ENCODE measurements at regions of chr10 and their contacts with region 1.

Region 1: DNA sequence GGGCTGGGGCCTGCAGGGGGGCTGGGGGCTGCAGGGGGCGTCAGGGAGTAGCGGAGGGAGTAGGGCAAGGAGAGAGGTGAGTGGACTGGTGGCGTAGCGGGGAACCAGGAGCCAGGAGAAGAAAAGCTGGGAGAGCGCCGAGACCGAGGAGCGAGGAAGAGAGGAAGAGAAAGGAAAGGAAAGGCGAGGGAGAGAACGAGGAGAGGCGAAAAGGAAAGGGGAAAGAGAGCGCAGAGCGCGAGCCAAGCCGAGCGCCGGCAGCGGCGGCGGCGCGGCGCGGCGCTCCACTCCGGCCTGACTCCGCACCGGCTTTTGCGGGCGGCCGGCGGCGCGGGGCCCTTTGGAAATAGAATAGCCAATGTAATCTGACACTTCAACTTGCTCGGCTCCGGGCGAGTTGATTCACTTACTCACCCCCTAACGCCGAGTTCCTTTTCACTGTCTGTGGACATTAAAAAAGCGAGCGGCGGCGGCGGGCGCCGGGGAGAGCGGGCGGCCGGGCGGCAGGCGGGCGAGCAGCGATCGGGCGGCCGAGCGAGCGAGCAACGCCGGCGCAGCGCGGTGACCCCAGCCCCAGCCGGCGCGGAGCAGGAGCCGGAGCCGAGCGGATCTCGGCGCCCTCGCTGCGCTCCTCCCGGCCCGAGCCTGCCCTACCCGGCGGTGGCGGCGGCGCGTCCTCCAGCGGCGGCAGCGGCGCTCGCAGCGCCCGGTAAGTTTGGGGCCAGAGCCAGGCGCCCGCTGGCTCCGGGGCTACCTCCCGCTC is at the start of gene ZMIZ1:
- DNase-seq: peak; percentile 88
- H3K4me3 Mint-ChIP-seq: peak within 1 kb of the TSS; percentile 89
- H3K27ac Mint-ChIP-seq: peak within 1 kb of the TSS; percentile 66
- H3K4me1 Mint-ChIP-seq: peaks cover 36% of the 10 kb centered on the region
- H3K27me3 Mint-ChIP-seq: no peaks in the 10 kb centered on the region
- total RNA-seq, gene ZMIZ1: 28.5 to 29.2 TPM

Region 2: DNA sequence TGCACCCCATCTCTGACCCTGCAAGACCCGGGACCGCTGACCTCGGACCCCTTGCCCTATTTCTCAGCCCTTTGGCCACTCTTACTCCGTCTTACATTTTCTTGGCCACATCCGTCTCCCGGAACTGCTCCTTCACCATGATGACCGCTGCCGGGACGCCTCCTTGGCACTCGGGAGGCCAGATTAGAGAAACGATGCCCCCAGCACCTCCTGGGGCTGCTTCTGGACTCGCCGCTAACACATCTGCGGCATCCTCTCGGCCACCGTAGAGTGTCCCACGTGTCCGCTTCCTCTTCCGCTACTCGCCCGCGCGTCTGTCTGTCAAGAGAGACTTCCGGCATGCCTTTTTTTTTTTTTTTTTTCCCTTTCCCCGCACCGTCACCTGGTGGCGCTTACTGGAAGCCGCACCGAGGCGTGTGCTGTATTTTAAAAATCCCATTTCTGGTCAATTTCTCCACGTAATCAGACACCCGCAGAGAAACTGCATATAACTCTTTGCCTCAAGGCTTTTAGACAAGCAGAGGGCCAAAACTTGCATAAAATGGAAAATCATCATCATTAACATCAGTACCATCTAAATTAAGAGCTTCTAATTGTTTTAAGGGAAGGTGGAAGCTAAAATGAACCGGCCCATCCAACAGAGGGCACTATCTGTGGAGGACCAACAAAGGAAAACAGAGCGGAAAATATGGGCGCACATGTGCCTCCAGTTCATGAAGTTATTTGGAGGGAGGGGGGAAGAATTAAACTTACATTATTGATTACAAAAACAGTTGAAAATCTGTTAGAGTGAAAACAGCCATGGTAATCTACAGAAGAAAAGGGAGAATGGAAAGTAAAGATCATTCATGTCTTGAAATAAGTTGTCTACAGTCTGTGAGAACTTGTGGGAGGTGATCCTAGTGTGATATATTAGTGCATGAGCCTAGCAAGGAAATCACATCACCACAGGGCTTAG is 1039.2 kb before region 1 on chr10 and contains the start of gene POLR3A:
- CTCF ChIA-PET with region 1: no interaction called
- POLR2A ChIA-PET with region 1: no interaction called
- intact Hi-C with region 1: loop called (anchors 5 kb)
- DNase-seq: peak; percentile 94
- H3K4me3 Mint-ChIP-seq: peak within 1 kb of the TSS; percentile 99
- H3K27ac Mint-ChIP-seq: peak within 1 kb of the TSS; percentile 93
- H3K4me1 Mint-ChIP-seq: peaks cover 33% of the 10 kb centered on the region
- H3K27me3 Mint-ChIP-seq: no peaks in the 10 kb centered on the region
- total RNA-seq, gene POLR3A: 16.6 to 17.0 TPM

Region 3: GRCh38 chr10:78763651-78764311 is 305.0 kb before region 1 on chr10:
- CTCF ChIA-PET with region 1: no interaction called
- POLR2A ChIA-PET with region 1: no interaction called
- intact Hi-C with region 1: loop called (anchors 2 kb)
- DNase-seq: peak; percentile 85
- H3K4me3 Mint-ChIP-seq: no peak overlapping the region
- H3K27ac Mint-ChIP-seq: peak overlapping the region; percentile 90
- H3K4me1 Mint-ChIP-seq: peaks cover 30% of the 10 kb centered on the region
- H3K27me3 Mint-ChIP-seq: peaks cover 3% of the 10 kb centered on the region

Region 4: GRCh38 chr10:78865538-78865875 is 203.2 kb before region 1 on chr10:
- CTCF ChIA-PET with region 1: no interaction called
- POLR2A ChIA-PET with region 1: no interaction called
- intact Hi-C with region 1: no loop called
- DNase-seq: no peak
- H3K4me3 Mint-ChIP-seq: no peak overlapping the region
- H3K27ac Mint-ChIP-seq: no peak overlapping the region
- H3K4me1 Mint-ChIP-seq: no peaks in the 10 kb centered on the region
- H3K27me3 Mint-ChIP-seq: peaks cover 8% of the 10 kb centered on the region

Region 5: GRCh38 chr10:78972947-78973900 is 95.5 kb before region 1 on chr10:
- CTCF ChIA-PET with region 1: interaction called, 8 read pairs
- POLR2A ChIA-PET with region 1: interaction called, 8 read pairs
- intact Hi-C with region 1: loop called (anchors 1 kb)
- DNase-seq: peak; percentile 83
- H3K4me3 Mint-ChIP-seq: peak overlapping the region; percentile 49
- H3K27ac Mint-ChIP-seq: peak overlapping the region; percentile 43
- H3K4me1 Mint-ChIP-seq: peaks cover 22% of the 10 kb centered on the region
- H3K27me3 Mint-ChIP-seq: no peaks in the 10 kb centered on the region

Region 6: GRCh38 chr10:79047875-79048638 is 20.7 kb before region 1 on chr10:
- CTCF ChIA-PET with region 1: interaction called, 3 read pairs
- POLR2A ChIA-PET with region 1: no interaction called
- intact Hi-C with region 1: loop called (anchors 1 kb)
- DNase-seq: peak; percentile 79
- H3K4me3 Mint-ChIP-seq: peak overlapping the region; percentile 26
- H3K27ac Mint-ChIP-seq: peak overlapping the region; percentile 86
- H3K4me1 Mint-ChIP-seq: peaks cover 46% of the 10 kb centered on the region
- H3K27me3 Mint-ChIP-seq: no peaks in the 10 kb centered on the region